Adrenal gland (tissue), 19 donors: ENCODE measurements at regions of chr3 and their contacts with region 1.

Region 1: DNA sequence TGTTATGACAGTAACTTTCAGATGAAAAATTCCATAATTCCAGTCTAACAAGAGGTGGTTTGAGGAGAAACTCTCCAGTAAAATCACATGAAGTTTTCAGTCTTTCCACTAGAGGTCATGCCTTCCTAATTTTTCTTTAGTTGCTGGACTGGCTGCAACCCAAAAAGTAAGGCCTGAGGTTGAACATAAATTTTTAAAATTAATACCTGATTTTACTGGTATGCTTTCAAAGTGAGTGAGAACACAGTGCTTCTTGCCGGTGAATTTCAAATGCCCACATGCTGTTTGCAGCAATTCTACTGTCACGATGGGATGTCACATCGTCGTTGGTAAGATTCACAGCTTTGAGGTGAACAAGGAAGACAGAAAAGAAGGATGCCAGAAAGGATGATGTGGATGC is 89.0 kb upstream of the FGF12 start:
- DNase-seq: peak in 1 of 7 donors; percentile 37
- H3K4me3 ChIP-seq: no peak overlapping the region
- H3K27ac ChIP-seq: no peak overlapping the region
- H3K4me1 ChIP-seq: no peaks in the 10 kb centered on the region
- H3K27me3 ChIP-seq: no peaks in the 10 kb centered on the region
- CTCF ChIP-seq: peak; percentile 55 to 86 (median 78)
- POLR2A ChIP-seq: no peak

Region 2: DNA sequence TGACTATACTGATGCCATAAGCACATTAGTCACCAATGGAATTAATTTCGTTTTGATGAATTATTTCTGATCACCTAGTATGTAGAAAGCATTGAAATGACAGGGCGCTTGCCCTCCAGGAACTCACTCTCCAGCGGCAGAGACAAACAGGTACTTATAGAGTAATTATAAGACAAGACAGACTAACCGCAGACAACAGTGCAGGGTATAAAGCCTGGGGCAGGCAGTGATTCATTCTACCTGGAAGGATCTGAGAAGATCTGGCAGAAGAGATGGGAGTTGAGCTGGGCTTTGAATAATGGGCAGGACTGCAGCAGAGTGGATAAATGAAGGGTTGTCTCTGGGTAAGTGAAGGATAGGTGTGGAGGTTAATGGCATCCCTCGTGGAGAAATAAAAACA is 420.8 kb before region 1 on chr3:
- intact Hi-C with region 1: no loop called
- DNase-seq: no peak
- H3K4me3 ChIP-seq: no peak overlapping the region
- H3K27ac ChIP-seq: no peak overlapping the region
- H3K4me1 ChIP-seq: no peaks in the 10 kb centered on the region
- H3K27me3 ChIP-seq: no peaks in the 10 kb centered on the region
- CTCF ChIP-seq: no peak
- POLR2A ChIP-seq: no peak

Region 3: DNA sequence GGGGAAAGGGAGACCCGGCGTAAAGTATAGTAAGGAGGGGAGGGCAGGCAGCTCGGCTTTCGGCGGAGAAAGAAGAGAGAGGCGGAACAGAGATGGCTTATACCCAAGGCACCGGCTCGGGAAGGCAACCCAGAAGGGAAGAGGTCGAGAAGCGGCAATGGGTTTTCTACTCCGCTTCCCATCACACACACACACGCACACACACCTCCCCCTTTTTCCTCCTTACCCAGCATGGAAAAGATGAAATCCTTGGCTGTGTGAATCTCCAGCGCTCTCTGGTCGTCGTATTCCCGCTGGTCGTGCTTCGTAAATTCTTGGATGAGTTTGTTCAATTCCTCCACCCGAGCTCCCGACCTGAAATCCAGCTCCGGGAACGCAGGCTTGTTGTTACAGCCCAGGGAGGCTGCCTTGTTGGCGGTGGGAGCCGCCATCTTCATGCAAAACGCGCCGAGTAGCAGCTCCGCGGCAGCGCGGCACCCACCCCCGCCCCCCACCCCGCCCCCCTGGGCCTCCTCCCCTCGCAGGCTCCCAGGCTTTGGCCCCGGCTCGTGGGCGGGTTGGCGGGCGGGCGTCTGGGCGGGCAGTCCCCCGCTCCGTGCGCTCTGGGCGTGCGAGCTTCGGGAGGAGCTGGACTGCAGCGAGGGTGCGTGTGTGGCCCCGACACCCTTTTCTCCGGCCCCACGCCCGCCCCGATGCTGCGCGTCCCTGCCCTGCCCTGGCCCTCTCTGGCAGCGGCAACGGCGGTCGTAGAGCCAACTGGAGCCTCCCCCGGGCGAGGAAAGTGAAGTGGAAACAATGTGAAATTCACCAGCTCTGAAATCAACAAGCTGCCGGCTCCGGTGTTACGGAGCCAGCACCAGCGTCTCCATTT is 101.3 kb after region 1 on chr3 and contains the start of gene MB21D2:
- intact Hi-C with region 1: loop called in 1 of 2 experiments (anchors 5 kb)
- DNase-seq: peak; percentile 73 to 83 (median 75)
- H3K4me3 ChIP-seq: peak within 1 kb of the TSS in 3 of 4 donors; percentile 54 to 91 (median 75)
- H3K27ac ChIP-seq: peak within 1 kb of the TSS; percentile 41 to 93 (median 90)
- H3K4me1 ChIP-seq: peaks cover 0 to 20% of the 10 kb centered on the region in 2 donors
- H3K27me3 ChIP-seq: no peaks in the 10 kb centered on the region
- CTCF ChIP-seq: peak in 2 of 6 experiments; percentile 33 to 35
- POLR2A ChIP-seq: peak; percentile 64 to 82
- total RNA-seq, gene MB21D2: 1.9 to 16.8 (median 6.0) TPM

Region 4: DNA sequence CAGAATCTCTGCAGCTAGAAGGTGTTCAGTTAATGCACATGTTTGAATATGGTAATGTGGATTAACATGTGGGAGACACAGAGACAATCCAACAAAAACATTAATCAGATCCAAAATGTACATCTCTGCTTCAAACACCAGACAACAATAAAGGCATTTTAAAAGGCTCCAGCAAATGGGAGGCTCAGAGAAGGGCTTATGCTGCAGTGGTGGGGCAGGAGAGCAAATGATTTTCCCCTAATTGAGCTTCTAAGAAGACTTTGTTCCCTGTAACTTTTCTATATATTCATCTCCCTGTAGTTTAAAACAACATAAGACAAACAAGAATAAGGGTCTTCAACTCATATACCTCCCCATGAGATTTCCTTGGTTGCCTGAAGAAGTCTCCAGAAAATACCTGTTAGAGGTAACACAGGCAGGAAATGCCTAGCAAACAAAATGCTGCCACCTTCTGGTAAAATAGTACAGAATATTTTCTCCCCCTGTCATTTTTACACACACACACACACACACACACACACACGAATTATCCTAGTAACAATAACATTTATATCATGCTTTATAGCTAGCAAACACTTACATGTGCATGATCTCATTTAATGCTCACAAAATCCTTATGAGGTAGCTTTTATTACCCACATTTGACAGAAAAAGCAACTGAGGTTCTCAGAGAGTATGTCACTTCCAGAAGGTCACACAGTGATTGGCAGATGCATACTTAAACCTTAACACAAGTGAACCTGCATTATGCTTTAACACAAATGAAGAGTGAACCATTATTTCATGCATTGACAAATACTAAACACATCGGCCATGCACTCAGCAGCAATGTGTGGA is 224.7 kb after region 1 on chr3:
- intact Hi-C with region 1: loop called (anchors 5 kb)
- DNase-seq: peak in 2 of 7 donors; percentile 1 to 14
- H3K4me3 ChIP-seq: no peak overlapping the region
- H3K27ac ChIP-seq: no peak overlapping the region
- H3K4me1 ChIP-seq: no peaks in the 10 kb centered on the region
- H3K27me3 ChIP-seq: no peaks in the 10 kb centered on the region
- CTCF ChIP-seq: peak; percentile 52 to 87 (median 57)
- POLR2A ChIP-seq: no peak

Region 5: DNA sequence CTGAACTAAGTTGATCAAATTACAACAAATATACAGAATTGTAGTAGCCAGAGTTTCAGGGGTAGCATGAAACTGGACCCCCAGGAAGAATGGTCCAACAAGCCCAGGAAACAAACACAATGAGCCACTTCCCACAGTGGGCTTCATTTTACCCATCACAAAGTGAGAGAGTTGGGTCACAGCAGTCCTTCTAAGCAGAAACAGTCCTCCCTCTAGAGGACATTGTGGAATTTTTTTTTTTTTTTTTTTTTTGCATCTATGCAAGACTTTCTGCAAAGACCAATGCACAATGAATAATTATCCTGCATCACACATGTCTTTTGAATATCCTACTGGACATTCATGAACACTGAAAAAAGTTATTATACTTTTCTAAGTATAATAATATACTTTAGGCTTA is 636.0 kb after region 1 on chr3:
- intact Hi-C with region 1: loop called in 1 of 2 experiments (anchors 10 kb)
- DNase-seq: no peak
- H3K4me3 ChIP-seq: no peak overlapping the region
- H3K27ac ChIP-seq: no peak overlapping the region
- H3K4me1 ChIP-seq: no peaks in the 10 kb centered on the region
- H3K27me3 ChIP-seq: no peaks in the 10 kb centered on the region
- CTCF ChIP-seq: peak; percentile 13 to 40 (median 26)
- POLR2A ChIP-seq: no peak